Posterior cingulate gyrus (tissue), 11 donors: ENCODE measurements at regions of chr9 and their contacts with region 1.

Region 1: DNA sequence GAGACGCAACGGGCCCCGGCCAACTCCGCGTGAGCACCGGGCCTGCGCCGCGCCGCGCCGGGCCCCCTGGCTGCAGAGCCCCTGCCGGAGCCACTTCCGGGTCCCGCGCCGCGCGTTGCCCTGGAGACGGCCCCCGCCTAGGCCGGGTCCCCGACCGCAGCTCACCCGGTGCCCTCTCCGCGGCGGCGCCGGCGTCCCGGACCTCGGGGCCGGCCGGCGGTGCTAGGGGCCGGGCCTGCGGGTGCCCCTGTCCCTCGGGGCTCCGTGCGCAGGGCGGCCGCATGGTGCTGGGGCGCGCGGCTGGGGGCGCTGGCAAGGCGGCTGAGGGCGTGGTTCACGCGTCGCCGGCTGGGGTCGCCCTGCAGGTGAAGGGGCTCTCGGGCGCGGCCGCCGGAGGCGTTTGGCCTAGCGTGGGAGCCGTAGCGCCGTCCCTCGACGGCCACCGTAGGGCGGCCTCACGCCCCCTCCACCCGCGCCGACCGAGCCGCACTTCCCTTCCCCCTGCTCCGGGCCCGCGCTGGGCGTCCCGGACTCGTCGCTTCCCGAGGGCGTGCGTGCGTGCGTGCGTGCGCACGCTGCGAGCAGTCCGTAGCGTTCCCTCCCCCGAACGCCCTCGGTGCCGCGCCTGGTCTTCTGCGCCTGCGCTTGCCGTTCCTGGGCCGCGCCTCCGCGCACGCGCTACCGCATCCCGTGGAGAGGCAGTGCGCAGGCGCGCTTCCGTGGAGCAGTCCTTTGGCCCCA is at the start of gene TMEM250:
- DNase-seq: peak; percentile 87 to 99 (median 90)

Region 2: GRCh38 chr9:135701959-135702721 is 416.4 kb before region 1 on chr9 and contains the start of gene KCNT1:
- intact Hi-C with region 1: loop called (anchors 5 kb)
- DNase-seq: peak in 8 of 10 donors; percentile 49 to 95 (median 66)

Region 3: GRCh38 chr9:135864447-135865049 is 253.9 kb before region 1 on chr9:
- intact Hi-C with region 1: loop called (anchors 5 kb)
- DNase-seq: peak in 9 of 10 donors; percentile 56 to 95 (median 84)

Region 4: DNA sequence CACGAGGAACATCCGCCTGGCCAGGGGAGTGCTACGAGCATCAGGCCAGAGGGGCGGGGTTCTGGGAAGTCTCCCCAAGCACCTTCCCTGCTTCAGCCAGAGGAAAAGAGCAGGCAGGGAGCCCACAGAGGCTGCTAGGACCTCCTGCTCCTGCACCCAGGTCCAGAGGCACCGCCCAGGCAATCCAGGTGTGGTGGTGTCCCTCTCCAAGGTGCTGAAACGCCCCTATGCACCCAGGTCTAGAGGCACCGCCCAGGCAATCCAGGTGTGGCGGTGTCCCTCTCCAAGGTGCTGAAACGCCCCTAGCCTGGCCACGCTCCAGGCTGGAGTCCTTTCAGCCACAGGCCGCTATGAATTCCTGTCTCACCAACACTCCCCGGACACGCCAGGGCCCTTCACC is 146.6 kb before region 1 on chr9:
- intact Hi-C with region 1: loop called (anchors 1 kb)
- DNase-seq: no peak

Region 5: DNA sequence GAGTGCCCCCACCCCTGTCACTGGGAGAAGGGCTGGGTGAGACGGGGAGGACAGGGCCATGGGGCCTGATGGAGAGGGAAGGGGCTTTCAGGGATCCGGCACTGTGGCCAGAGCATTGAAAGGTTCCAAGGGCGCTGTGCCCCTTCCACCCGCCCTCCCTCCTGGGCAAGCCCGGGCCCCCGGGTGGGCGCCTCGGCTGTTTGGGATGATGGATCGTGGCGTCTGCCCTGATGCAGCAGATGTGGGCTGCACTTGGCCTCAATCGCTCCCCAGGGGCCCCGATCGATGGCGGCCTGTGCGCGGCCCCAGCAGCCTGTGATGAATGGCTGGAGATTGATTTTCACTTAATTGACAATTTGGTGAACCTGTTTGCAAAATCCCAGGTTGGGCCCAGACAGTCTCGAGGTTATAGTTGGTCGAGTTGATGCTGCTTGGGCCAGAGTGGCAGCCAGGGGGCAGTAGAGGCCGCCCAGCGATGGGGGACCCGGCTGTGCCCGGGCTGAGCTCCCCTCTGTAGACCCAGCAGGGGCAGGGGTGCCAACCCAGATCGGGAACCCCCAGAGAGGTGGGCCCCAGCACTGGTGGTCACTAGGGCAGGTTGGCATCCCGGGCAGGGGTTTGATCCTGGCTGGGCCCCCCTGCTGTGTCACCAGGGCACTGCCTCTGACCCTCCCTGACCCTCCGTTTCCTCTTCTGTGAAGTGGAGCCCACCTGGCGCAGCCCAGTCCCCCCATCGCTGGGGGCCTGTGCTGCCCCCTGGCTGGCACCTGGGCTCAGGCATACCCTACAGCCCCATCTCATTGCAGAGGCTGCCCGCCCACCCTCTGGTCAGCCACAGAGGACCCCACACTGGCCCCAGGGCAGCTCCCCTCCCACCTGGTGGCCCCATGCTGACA is 51.8 kb after region 1 on chr9:
- intact Hi-C with region 1: no loop called
- DNase-seq: peak in 5 of 10 donors; percentile 22 to 87 (median 37)